Sigmoid colon (tissue), 7 donors: ENCODE measurements at regions of chr9 and their contacts with region 1.

Region 1: DNA sequence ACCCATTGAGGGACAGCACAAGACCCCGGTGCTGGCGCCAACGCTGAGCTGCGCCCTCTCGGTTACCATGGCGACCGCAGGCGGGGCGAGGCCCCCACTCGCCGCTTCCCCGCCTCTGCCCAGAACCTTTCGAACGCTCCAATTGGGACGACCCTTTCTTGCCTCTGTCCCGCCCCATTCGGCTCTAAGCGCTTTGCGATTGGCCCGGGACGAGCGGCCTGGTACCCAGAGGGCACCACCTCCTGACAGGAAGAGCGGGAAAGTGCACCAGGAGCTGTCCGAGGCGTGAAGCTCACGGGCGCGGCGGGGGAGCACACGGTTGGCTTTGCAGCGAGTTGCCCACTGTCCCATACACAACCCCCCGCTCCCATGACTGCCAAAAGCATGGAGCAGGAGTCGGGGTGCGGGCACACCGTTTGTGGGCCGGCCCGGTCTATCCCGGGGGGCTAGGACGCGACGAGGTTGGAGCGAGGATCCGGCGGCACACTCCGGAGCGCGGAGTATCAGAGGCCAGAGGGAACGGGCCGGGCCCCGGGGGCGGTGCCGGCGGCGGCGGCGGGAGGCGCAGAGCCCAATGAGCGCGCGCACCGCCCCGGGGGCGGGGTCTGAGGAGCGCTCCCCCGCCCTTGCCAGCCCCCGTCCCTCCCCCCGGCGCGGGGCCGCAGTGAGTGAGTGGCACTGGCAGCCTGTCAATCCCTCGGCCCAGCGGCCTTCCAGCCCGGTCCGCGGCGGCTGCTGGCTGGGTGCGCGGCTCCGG is 978 bp upstream of the PBX3 start:
- DNase-seq: peak; percentile 96
- H3K4me3 ChIP-seq: peak overlapping the region; percentile 47 to 94 (median 80)
- H3K27ac ChIP-seq: peak overlapping the region; percentile 88 to 94 (median 92)
- H3K4me1 ChIP-seq: peaks cover 0 to 16% (median 8%) of the 10 kb centered on the region in 4 donors
- H3K27me3 ChIP-seq: no peaks in the 10 kb centered on the region
- CTCF ChIP-seq: no peak
- EP300 ChIP-seq: no peak
- POLR2A ChIP-seq: no peak

Region 2: DNA sequence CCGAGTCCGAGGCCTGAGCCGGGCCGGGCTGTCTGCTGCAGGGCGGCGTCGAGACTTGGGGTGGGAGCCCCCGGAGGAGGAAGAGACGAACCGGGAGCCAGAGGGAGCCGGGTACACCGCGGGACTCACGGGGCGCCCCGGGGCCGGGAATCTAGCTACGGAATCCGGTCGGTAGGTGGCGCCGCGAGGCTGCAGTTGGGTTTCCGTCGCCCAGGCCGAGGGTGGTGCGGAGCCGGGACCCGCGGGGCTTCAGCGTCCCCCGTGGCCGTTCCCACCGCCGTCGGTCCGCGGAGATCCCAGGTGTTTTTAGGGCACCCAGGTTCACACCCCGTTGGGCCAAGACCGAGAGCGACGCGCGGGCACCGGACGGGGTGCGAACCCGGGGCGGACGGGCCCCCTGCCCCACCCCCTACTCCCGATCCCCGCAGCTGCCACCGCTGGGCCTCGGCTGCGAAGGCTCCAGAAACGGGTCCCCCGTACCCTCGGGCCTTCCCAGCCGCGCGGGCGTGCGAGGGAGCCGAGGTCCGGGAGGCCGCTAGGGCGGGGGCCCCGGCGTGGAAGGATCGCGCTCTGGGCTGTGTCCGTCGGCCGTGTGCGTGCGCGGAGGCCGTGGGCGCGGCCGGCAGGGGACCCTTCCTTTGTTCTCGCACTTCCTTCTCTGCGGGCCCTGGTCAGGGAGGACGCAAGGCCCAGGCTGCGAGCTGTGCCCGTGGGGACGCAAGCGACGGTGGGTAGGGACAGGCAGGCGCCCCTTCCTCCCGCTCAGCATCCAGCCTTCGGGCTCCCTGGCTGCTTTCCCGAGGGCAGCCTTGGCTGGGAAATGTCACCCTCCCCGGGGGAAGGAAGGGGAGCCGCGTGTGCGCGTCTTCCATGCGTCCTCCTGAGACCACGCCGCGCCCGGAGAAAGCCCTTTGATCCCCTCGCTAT is 338.0 kb before region 1 on chr9:
- intact Hi-C with region 1: loop called (anchors 5 kb)
- DNase-seq: peak; percentile 91
- H3K4me3 ChIP-seq: peak overlapping the region; percentile 53 to 81 (median 68)
- H3K27ac ChIP-seq: peak overlapping the region; percentile 4 to 80 (median 79)
- H3K4me1 ChIP-seq: peaks cover 0 to 18% (median 13%) of the 10 kb centered on the region in 4 donors
- H3K27me3 ChIP-seq: no peaks in the 10 kb centered on the region
- CTCF ChIP-seq: peak; percentile 81 to 89 (median 86)
- EP300 ChIP-seq: no peak
- POLR2A ChIP-seq: no peak

Region 3: GRCh38 chr9:125706661-125707471 is 39.3 kb before region 1 on chr9 and contains the start of gene MAPKAP1:
- intact Hi-C with region 1: loop called (anchors 2 kb)
- DNase-seq: peak; percentile 99
- H3K4me3 ChIP-seq: peak within 1 kb of the TSS; percentile 80 to 100 (median 90)
- H3K27ac ChIP-seq: peak within 1 kb of the TSS; percentile 76 to 89 (median 82)
- H3K4me1 ChIP-seq: peaks cover 0 to 25% (median 17%) of the 10 kb centered on the region in 4 donors
- H3K27me3 ChIP-seq: no peaks in the 10 kb centered on the region
- CTCF ChIP-seq: no peak
- EP300 ChIP-seq: no peak
- POLR2A ChIP-seq: peak; percentile 48 to 51
- total RNA-seq, gene MAPKAP1: 84.3 to 155 (median 88.2) TPM

Region 4: DNA sequence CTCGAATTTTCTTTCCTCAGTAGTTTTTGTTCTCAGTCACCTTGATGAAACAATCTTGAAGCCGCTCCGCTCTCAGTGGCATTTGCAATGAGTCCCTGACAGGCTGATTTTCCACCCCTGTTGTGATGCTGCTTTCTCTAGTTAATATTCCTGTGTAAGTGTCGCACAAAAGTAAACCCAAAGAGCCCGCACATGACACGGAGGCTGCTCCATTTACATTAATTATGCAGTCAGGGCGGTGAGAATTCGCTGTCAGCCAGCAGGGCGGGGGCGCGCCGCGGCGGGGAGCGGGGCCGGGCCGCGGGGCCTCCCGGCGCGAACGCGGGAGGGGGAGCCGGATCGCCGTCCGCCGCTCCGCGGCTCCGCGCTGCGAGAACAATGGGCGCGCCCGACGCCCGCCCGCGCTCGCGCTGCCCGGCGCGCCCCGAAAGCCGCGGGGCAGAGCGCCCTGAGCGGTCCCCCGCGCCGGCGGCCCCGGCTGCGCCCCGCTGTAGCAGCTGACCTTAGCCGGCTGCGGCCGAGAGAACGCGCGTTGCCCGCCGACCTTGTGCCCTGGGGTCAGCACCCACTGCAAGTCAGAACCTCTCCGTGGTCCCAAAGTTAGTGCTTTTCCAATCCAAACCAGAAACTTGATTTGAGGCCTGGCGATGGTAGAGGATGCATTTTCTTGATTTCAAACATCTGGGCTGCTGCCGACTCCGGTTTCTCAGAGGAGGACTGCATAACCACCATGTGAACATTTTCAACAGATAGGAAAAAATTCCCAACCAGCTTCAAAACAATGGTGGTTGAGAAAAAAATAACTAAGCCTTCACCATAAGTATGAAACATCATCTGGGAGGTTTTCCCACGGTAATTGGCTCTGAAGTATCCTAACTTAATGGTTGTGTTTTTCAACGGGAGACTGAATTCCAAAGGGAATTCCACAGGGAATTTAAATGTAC is 143.6 kb after region 1 on chr9:
- intact Hi-C with region 1: loop called (anchors 2 kb)
- DNase-seq: peak; percentile 61
- H3K4me3 ChIP-seq: peak overlapping the region; percentile 41 to 56 (median 51)
- H3K27ac ChIP-seq: peak overlapping the region; percentile 75 to 86 (median 83)
- H3K4me1 ChIP-seq: peaks cover 0 to 91% (median 62%) of the 10 kb centered on the region in 4 donors
- H3K27me3 ChIP-seq: no peaks in the 10 kb centered on the region
- CTCF ChIP-seq: no peak
- EP300 ChIP-seq: no peak
- POLR2A ChIP-seq: no peak

Region 5: DNA sequence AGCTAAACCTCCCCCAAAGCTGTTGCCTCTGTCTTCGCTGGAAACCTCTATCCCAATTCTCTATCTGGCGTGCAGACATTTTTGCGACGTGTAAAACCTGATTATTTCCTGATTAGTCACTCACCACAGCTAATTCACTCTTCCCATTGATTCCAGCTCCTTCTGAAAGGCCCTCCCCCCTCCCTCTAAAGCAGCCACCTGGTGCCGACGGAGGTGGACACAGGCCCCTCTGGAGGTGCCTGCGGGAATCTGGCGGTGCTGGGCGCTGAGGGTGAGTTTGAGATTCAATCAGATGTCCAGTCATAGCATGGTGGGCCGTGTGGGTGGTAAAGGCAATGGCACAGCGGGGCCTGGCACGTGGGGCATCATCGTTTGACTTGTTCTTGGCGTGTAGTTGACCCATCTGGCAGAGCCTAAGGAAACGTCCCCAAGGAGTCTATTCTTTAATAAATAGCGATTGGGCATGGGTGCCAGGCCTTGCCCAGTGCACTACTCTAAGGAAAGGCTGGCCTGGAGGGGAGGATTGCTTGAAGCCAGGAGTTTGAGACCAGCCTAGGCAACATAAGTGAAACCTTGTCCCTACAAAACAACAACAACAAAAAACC is 309.3 kb after region 1 on chr9:
- intact Hi-C with region 1: no loop called
- DNase-seq: peak; percentile 50
- H3K4me3 ChIP-seq: no peak overlapping the region
- H3K27ac ChIP-seq: no peak overlapping the region
- H3K4me1 ChIP-seq: peaks cover 0 to 4% (median 0%) of the 10 kb centered on the region in 4 donors
- H3K27me3 ChIP-seq: peaks cover 0 to 11% (median 0%) of the 10 kb centered on the region in 3 donors
- CTCF ChIP-seq: no peak
- EP300 ChIP-seq: no peak
- POLR2A ChIP-seq: no peak

Region 6: GRCh38 chr9:126228781-126229444 is 482.7 kb after region 1 on chr9:
- intact Hi-C with region 1: loop called (anchors 5 kb)
- DNase-seq: peak; percentile 84
- H3K4me3 ChIP-seq: no peak overlapping the region
- H3K27ac ChIP-seq: no peak overlapping the region
- H3K4me1 ChIP-seq: peaks cover 0 to 6% (median 0%) of the 10 kb centered on the region in 4 donors
- H3K27me3 ChIP-seq: peaks cover 0 to under 1% (median 0%) of the 10 kb centered on the region in 3 donors
- CTCF ChIP-seq: peak; percentile 87 to 98 (median 95)
- EP300 ChIP-seq: no peak
- POLR2A ChIP-seq: no peak